HepG2 (cell line): ENCODE measurements at regions of chr6 and their contacts with region 1.

Region 1: DNA sequence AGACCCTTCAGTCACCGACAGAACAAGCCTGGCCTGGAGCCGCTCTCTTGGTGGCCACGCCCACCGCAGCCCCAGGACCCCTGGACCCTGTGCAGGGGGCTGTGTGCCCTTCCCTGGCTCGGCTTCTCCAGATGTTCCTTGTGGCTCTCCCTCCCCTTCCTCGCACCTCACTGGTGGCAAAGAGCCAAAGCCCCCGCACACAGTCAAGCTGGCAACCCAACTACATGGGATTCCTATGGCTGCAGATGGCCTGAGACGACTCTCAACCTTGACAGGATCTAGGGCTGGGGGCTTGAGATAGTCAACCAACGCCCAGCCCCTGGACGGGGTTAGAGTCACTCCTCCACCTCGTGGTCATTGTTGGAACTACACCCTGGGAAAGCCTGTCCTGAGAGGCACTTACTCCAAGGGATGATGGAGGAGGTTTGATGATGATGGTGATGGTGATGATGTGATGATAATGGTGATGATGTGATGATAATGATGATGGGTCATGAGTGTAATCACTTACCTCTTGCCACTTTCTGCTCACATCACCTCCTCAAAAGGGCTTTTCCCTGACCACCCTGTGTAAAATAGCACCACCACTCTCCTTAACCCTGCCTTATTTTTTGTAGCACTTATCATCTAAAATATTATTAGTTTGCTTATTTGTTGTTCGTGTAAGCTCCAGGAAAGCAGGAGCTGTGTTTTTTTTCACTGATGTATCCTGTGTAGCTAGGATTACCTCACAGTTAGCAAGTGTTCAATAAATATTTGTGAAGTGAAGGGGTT is 278.4 kb downstream of the LRFN2 start:
- DNase-seq: peak; percentile 56
- ATAC-seq: peak; percentile 95
- H3K4me3 ChIP-seq: no peak overlapping the region
- H3K27ac ChIP-seq: no peak overlapping the region
- H3K4me1 ChIP-seq: no peaks in the 10 kb centered on the region
- H3K27me3 ChIP-seq: peaks cover 0 to 25% of the 10 kb centered on the region in 2 experiments; a peak in 3 of 5 replicates
- CTCF ChIP-seq: peak; percentile 95
- EP300 ChIP-seq: no peak
- POLR2A ChIP-seq: no peak
- RAD21 ChIP-seq: peak; percentile 74; the same call in 1 of the 2 replicates

Region 2: DNA sequence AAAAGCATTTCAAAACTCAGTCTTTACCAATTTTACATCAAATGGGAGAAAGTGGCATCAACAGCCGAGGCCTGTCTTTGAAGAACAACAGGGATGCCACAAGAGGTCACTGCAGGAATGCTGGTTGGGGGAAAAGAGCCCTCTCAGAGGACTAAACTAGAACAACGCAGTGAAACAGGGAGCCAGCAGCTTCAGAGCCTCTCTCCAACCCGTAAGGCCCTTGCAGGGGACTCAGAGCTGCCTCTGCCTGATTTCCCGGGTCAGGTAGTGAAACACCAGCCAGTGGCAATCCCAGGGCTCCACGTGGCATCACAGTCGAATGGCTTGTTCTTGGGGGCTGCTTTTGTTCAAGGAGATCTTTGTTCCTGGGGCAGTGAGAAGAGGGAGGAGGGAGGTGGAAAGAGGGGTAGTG is 931.2 kb before region 1 on chr6:
- CTCF ChIA-PET with region 1: no interaction called
- POLR2A ChIA-PET with region 1: no interaction called
- in situ Hi-C with region 1: loop called (anchors 10 kb)
- intact Hi-C with region 1: loop called (anchors 10 kb)
- DNase-seq: peak; percentile 33
- ATAC-seq: peak; percentile 94
- H3K4me3 ChIP-seq: no peak overlapping the region
- H3K27ac ChIP-seq: no peak overlapping the region
- H3K4me1 ChIP-seq: no peaks in the 10 kb centered on the region
- H3K27me3 ChIP-seq: no peaks in the 10 kb centered on the region
- CTCF ChIP-seq: peak; percentile 81
- EP300 ChIP-seq: no peak
- POLR2A ChIP-seq: no peak
- RAD21 ChIP-seq: peak; percentile 75

Region 3: GRCh38 chr6:39865011-39865888 is 443.5 kb before region 1 on chr6:
- CTCF ChIA-PET with region 1: no interaction called
- POLR2A ChIA-PET with region 1: no interaction called
- in situ Hi-C with region 1: loop called (anchors 10 kb)
- intact Hi-C with region 1: no loop called
- DNase-seq: peak; percentile 74
- ATAC-seq: peak; percentile 92
- H3K4me3 ChIP-seq: no peak overlapping the region
- H3K27ac ChIP-seq: no peak overlapping the region
- H3K4me1 ChIP-seq: no peaks in the 10 kb centered on the region
- H3K27me3 ChIP-seq: no peaks in the 10 kb centered on the region
- CTCF ChIP-seq: peak; percentile 86
- EP300 ChIP-seq: no peak
- POLR2A ChIP-seq: no peak
- RAD21 ChIP-seq: peak; percentile 72

Region 4: GRCh38 chr6:39980839-39981580 is 327.7 kb before region 1 on chr6:
- CTCF ChIA-PET with region 1: interaction called, 35 read pairs
- POLR2A ChIA-PET with region 1: no interaction called
- in situ Hi-C with region 1: loop called (anchors 5 kb)
- intact Hi-C with region 1: no loop called
- DNase-seq: peak; percentile 52
- ATAC-seq: peak; percentile 91
- H3K4me3 ChIP-seq: no peak overlapping the region
- H3K27ac ChIP-seq: no peak overlapping the region
- H3K4me1 ChIP-seq: no peaks in the 10 kb centered on the region
- H3K27me3 ChIP-seq: no peaks in the 10 kb centered on the region
- CTCF ChIP-seq: peak; percentile 70
- EP300 ChIP-seq: no peak
- POLR2A ChIP-seq: no peak
- RAD21 ChIP-seq: no peak